ENCODE measurements at regions of chr15 and their contacts with region 1.

Region 1: DNA sequence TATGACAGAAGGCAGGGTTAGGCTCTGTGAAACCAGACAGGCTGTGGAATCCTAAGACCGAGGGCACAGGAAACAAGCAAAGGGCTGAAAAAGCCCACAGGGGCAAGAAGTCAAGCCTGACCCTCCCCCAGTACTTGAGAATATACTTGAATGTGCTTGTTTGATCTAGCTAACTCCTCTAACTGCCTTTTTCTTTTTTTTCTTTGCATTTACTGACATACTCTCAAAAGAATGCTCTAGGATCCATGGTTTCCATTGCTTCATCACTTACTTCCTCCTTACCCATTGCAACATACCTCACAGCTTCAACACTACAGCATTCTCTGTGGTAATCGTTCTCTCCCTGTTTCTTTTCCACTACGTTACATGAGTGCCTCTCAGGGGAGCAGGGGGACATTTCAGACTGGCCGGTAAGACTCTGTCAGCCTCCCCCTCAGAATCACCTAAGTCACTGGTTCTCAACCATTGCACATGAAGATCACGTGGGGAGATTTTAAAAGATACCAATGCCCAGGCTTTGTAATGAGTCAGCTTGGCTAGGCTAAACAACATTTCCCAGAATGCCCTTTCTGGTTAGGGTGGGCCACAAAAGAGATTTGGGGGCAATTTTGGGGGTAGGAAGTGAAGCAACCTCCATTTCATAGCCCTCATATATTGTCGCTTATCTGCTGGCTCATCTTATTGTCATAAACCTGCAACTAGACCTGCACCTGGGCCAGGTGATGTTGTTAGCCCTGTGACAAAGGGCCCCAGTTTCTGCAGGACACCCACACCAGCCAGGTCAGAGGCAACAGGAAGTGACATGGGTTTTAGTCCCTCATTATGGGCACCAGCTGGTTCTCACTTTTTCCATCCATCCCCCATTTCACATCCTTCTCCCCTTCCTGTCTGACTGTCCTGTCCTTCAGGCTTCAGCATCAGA is 24.6 kb upstream of the RSL24D1 start:
- DNase-seq: peak in 1 of 2 experiments; percentile 49
- H3K4me3 ChIP-seq: no peak overlapping the region
- H3K4me3 Mint-ChIP-seq: peak overlapping the region; percentile 1
- H3K27ac Mint-ChIP-seq: peak overlapping the region; percentile 55
- H3K4me1 ChIP-seq: peaks cover 19% of the 10 kb centered on the region
- H3K4me1 Mint-ChIP-seq: peaks cover 14% of the 10 kb centered on the region
- H3K27me3 ChIP-seq: no peaks in the 10 kb centered on the region
- H3K27me3 Mint-ChIP-seq: no peaks in the 10 kb centered on the region
- CTCF ChIP-seq: no peak

Region 2: GRCh38 chr15:55151631-55152030 is 69.7 kb before region 1 on chr15:
- CTCF ChIA-PET with region 1: no interaction called
- POLR2A ChIA-PET with region 1: no interaction called
- intact Hi-C with region 1: no loop called
- DNase-seq: no peak
- H3K4me3 ChIP-seq: no peak overlapping the region
- H3K4me3 Mint-ChIP-seq: no peak overlapping the region
- H3K27ac Mint-ChIP-seq: no peak overlapping the region
- H3K4me1 ChIP-seq: no peaks in the 10 kb centered on the region
- H3K4me1 Mint-ChIP-seq: no peaks in the 10 kb centered on the region
- H3K27me3 ChIP-seq: no peaks in the 10 kb centered on the region
- H3K27me3 Mint-ChIP-seq: no peaks in the 10 kb centered on the region
- CTCF ChIP-seq: no peak

Region 3: DNA sequence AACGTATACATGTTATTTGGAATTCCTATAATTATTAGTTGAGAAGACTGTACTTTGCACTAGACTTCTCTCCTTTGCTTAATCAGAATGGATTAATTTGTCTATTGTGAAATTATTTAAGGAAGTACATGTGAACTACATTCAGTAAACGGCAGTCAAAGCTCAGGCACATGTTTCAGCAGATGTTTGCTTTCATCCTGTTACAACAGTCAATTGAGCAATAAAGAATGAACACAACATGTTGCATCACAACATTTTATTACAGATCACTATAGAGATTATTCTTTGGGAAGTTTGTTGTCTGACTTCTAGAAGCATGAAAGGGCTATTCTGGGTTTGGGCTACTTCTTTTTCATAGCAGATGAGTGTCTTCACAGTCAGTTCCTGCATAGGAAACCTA is 29.0 kb after region 1 on chr15:
- CTCF ChIA-PET with region 1: no interaction called
- POLR2A ChIA-PET with region 1: no interaction called
- intact Hi-C with region 1: loop called (anchors 1 kb)
- DNase-seq: peak in 1 of 2 experiments; percentile 51
- H3K4me3 ChIP-seq: no peak overlapping the region
- H3K4me3 Mint-ChIP-seq: no peak overlapping the region
- H3K27ac Mint-ChIP-seq: no peak overlapping the region
- H3K4me1 ChIP-seq: peaks cover 12% of the 10 kb centered on the region; the same call in 1 of the 2 replicates
- H3K4me1 Mint-ChIP-seq: peaks cover 4% of the 10 kb centered on the region
- H3K27me3 ChIP-seq: no peaks in the 10 kb centered on the region
- H3K27me3 Mint-ChIP-seq: no peaks in the 10 kb centered on the region
- CTCF ChIP-seq: no peak

Region 4: DNA sequence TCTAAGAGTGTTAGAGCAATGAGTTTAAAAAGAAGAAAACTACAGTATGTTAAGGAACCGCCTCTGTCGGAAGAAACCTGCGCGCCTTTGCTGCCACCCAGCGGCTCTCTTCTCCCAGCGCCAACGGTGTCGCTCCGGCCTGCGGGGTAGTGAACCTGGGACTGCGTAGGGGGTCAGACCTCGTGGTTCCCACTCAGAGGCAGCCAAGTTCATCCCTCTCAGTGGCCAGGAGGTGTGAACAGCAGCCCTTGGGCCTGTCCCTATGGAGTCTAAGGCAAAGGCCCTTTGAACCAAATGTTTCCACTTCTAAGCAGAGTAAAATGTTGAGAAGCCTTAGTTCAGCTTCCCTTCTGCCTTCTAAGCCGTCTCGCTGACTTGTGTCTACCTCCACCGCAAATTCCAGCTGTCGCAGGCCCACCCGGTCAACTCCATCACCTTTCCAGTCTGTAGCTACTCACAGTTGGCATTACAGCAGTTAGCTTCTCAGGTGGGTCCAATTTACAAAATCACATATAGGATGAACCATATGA is 69.2 kb after region 1 on chr15:
- CTCF ChIA-PET with region 1: interaction called, 5 read pairs
- POLR2A ChIA-PET with region 1: no interaction called
- intact Hi-C with region 1: loop called (anchors 1 kb)
- DNase-seq: peak; percentile 74 to 84
- H3K4me3 ChIP-seq: peak overlapping the region; percentile 86
- H3K4me3 Mint-ChIP-seq: peak overlapping the region; percentile 82
- H3K27ac Mint-ChIP-seq: no peak overlapping the region
- H3K4me1 ChIP-seq: no peaks in the 10 kb centered on the region; the same call in 1 of the 2 replicates
- H3K4me1 Mint-ChIP-seq: no peaks in the 10 kb centered on the region
- H3K27me3 ChIP-seq: no peaks in the 10 kb centered on the region
- H3K27me3 Mint-ChIP-seq: no peaks in the 10 kb centered on the region
- CTCF ChIP-seq: peak; percentile 69 to 90

Region 5: DNA sequence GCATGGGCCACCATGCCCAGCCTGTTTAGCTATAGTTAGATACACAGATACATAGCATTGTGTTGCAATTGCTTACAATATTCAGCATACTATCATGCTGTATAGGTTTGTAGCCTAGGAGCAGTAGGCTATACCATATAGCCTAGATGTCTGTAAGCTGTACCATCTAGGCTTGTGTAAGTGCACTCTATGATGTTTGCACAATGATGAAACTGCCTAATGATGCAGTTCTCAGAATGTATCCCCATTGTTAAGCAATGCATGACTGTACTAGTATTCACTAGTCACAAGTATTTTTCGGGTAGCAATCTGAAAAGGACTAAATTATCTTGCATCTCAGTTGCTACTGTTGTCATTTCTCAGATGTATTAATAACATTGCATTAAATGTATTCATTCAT is 113.6 kb after region 1 on chr15:
- CTCF ChIA-PET with region 1: no interaction called
- POLR2A ChIA-PET with region 1: no interaction called
- intact Hi-C with region 1: no loop called
- DNase-seq: no peak
- H3K4me3 ChIP-seq: no peak overlapping the region
- H3K4me3 Mint-ChIP-seq: no peak overlapping the region
- H3K27ac Mint-ChIP-seq: no peak overlapping the region
- H3K4me1 ChIP-seq: no peaks in the 10 kb centered on the region
- H3K4me1 Mint-ChIP-seq: no peaks in the 10 kb centered on the region
- H3K27me3 ChIP-seq: no peaks in the 10 kb centered on the region
- H3K27me3 Mint-ChIP-seq: no peaks in the 10 kb centered on the region
- CTCF ChIP-seq: no peak

Region 6: GRCh38 chr15:55389276-55389631 is 167.9 kb after region 1 on chr15:
- CTCF ChIA-PET with region 1: no interaction called
- POLR2A ChIA-PET with region 1: no interaction called
- intact Hi-C with region 1: no loop called
- DNase-seq: no peak
- H3K4me3 ChIP-seq: no peak overlapping the region
- H3K4me3 Mint-ChIP-seq: no peak overlapping the region
- H3K27ac Mint-ChIP-seq: no peak overlapping the region
- H3K4me1 ChIP-seq: no peaks in the 10 kb centered on the region
- H3K4me1 Mint-ChIP-seq: peaks cover 14% of the 10 kb centered on the region
- H3K27me3 ChIP-seq: no peaks in the 10 kb centered on the region
- H3K27me3 Mint-ChIP-seq: no peaks in the 10 kb centered on the region
- CTCF ChIP-seq: no peak

Measured in Caco-2 (cell line).